HEK293 (cell line): ENCODE measurements at regions of chr7 and their contacts with region 1.

Region 1: DNA sequence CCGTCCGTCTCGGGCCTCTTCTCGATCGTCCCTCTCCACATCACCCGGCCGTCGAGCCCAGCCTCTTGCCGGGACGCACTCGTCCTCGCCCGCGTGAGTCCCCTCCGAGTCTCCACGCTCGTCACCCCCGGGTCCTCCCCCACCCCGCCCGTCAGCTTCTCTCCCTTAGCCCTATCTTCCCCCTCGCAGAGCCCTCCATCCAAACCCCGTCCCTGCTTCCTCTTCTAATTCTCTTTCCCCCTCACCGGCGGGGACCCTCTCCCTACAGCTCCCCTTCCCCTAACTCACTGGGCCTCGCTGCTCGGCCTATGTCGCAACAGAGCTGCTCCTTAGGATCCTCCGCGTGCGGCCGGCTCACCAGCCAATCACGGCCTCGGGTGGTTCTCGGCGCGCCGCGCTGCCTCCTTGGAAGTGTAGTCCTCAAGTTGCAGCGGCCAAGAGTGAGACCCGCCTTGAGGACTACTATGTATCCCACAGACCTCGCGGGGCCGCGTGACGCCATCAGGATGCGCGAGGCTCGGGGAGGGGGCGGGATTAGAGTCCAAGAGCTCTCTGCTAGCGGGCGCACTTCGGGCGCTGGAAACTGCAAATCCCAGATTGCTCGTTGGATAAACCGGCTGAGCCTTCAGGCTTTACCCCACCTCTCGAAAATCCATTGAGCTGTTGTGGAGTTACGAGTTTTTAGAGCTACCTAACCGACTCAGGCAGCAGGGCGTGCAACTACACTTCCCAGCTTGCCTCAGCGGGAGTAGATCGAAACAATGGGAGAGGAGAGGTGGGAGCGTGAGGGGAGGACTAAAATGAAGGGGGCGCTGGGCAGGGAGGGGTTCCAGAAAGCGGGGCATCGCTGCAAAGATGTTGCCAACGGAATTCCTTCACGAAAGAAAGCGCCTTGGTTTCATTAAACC is at the start of gene ABCF2:
- H3K4me3 ChIP-seq: peak within 1 kb of the TSS; percentile 90
- H3K27ac ChIP-seq: peak within 1 kb of the TSS; percentile 46
- H3K4me1 ChIP-seq: peaks cover 3% of the 10 kb centered on the region; the same call in 1 of the 2 replicates
- CTCF ChIP-seq: peak; percentile 66; the same call in 1 of the 2 replicates

Region 2: GRCh38 chr7:151206914-151207313 is 20.2 kb before region 1 on chr7:
- CTCF ChIA-PET with region 1: no interaction called
- POLR2A ChIA-PET with region 1: interaction called, 15 read pairs
- H3K4me3 ChIP-seq: no peak overlapping the region
- H3K27ac ChIP-seq: no peak overlapping the region
- H3K4me1 ChIP-seq: no peaks in the 10 kb centered on the region
- CTCF ChIP-seq: no peak

Region 3: GRCh38 chr7:151237244-151238189 is 10.4 kb after region 1 on chr7:
- CTCF ChIA-PET with region 1: interaction called, 43 read pairs
- POLR2A ChIA-PET with region 1: interaction called, 26 read pairs
- H3K4me3 ChIP-seq: no peak overlapping the region
- H3K27ac ChIP-seq: no peak overlapping the region
- H3K4me1 ChIP-seq: no peaks in the 10 kb centered on the region
- CTCF ChIP-seq: no peak